CD8-positive, alpha-beta memory T cell (primary cell): ENCODE measurements at regions of chr12 and their contacts with region 1.

Region 1: GRCh38 chr12:56315622-56316473 is at the start of gene CNPY2:
- DNase-seq: peak; percentile 91 to 96 (median 93)
- H3K4me3 ChIP-seq: peak within 1 kb of the TSS; percentile 100
- H3K4me3 Mint-ChIP-seq: peak within 1 kb of the TSS; percentile 97 to 100 (median 99)
- H3K27ac ChIP-seq: peak within 1 kb of the TSS; percentile 97
- H3K27ac Mint-ChIP-seq: peak within 1 kb of the TSS; percentile 97 to 100 (median 99)
- H3K4me1 ChIP-seq: peaks cover 15% of the 10 kb centered on the region
- H3K4me1 Mint-ChIP-seq: peaks cover 14 to 21% (median 15%) of the 10 kb centered on the region in 3 donors
- H3K27me3 ChIP-seq: no peaks in the 10 kb centered on the region
- H3K27me3 Mint-ChIP-seq: no peaks in the 10 kb centered on the region
- total RNA-seq, gene CNPY2: 165 to 167 TPM

Region 2: GRCh38 chr12:56110571-56110970 is 205.3 kb before region 1 on chr12:
- CTCF ChIA-PET with region 1: no interaction called
- POLR2A ChIA-PET with region 1: no interaction called
- DNase-seq: no peak
- H3K4me3 ChIP-seq: no peak overlapping the region
- H3K4me3 Mint-ChIP-seq: peak overlapping the region in 1 of 7 donors; percentile 66
- H3K27ac ChIP-seq: no peak overlapping the region
- H3K27ac Mint-ChIP-seq: peak overlapping the region in 4 of 8 donors; percentile 53 to 79 (median 60)
- H3K4me1 ChIP-seq: peaks cover 14% of the 10 kb centered on the region
- H3K4me1 Mint-ChIP-seq: peaks cover 15 to 22% (median 18%) of the 10 kb centered on the region in 3 donors
- H3K27me3 ChIP-seq: no peaks in the 10 kb centered on the region
- H3K27me3 Mint-ChIP-seq: no peaks in the 10 kb centered on the region

Region 3: GRCh38 chr12:56221527-56222387 is 94.1 kb before region 1 on chr12 and contains the start of gene RNF41:
- CTCF ChIA-PET with region 1: no interaction called
- POLR2A ChIA-PET with region 1: no interaction called
- DNase-seq: peak; percentile 89 to 95 (median 92)
- H3K4me3 ChIP-seq: peak within 1 kb of the TSS; percentile 89
- H3K4me3 Mint-ChIP-seq: peak within 1 kb of the TSS; percentile 89 to 99 (median 97)
- H3K27ac ChIP-seq: peak within 1 kb of the TSS; percentile 96
- H3K27ac Mint-ChIP-seq: peak within 1 kb of the TSS; percentile 99 to 100 (median 100)
- H3K4me1 ChIP-seq: peaks cover 34% of the 10 kb centered on the region
- H3K4me1 Mint-ChIP-seq: peaks cover 42 to 56% (median 54%) of the 10 kb centered on the region in 3 donors
- H3K27me3 ChIP-seq: no peaks in the 10 kb centered on the region
- H3K27me3 Mint-ChIP-seq: peaks cover 0 to 2% of the 10 kb centered on the region in 2 donors
- total RNA-seq, gene RNF41: 41.2 to 42.3 TPM

Region 4: GRCh38 chr12:56333679-56334489 is 18.0 kb after region 1 on chr12 and contains the start of gene PAN2:
- CTCF ChIA-PET with region 1: interaction called, 9 read pairs
- POLR2A ChIA-PET with region 1: interaction called, 16 read pairs
- DNase-seq: peak; percentile 88 to 95 (median 94)
- H3K4me3 ChIP-seq: peak within 1 kb of the TSS; percentile 94
- H3K4me3 Mint-ChIP-seq: peak within 1 kb of the TSS; percentile 96 to 99 (median 97)
- H3K27ac ChIP-seq: peak within 1 kb of the TSS; percentile 99
- H3K27ac Mint-ChIP-seq: peak within 1 kb of the TSS; percentile 100
- H3K4me1 ChIP-seq: peaks cover 30% of the 10 kb centered on the region
- H3K4me1 Mint-ChIP-seq: peaks cover 30 to 53% (median 49%) of the 10 kb centered on the region in 3 donors
- H3K27me3 ChIP-seq: no peaks in the 10 kb centered on the region
- H3K27me3 Mint-ChIP-seq: peaks cover 0 to 5% of the 10 kb centered on the region in 2 donors
- total RNA-seq, gene PAN2: 36.6 to 40.4 TPM

Region 5: DNA sequence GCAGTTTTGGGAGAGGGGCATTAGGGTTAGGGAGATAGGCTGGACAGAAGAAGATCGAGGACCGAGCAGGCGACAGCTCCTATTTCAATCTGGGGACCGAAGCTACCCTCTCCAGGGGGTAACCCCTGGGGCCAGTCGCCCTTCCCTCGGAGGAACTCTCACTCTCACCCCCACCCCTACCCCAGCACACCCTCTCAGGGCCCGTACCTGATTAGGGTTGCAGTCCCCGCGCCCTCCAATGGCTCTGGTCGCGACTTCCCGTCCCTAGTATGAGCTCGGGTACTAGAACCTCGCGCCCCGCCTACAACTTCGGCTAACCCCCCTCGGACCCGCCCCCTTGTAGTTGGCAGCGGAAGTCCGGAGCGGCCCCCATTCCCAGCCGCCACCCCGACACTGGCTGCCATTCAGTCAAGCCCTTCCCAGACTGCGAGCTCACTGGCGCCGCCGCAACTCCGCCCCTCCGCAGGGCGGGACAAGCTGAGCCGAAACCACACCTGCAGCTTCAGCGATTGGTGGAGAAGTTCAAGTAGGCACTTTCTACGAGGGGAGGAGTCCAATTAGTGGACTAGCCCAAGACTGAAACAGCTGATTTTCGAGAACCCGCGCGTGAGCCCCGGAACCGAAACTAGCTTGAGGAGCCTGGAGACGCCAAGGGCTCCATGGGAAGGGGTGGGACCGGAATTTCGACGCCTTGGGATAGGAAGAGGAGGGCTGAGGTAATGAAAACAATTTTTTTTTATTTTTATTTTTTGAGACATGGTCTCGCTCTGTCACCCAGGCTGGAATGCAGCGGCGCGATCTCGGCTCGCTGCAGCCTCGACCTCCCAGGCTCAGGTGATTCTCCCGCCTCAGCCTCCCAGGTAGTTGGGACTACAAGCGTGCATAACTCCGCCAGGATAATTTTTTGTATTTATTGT is 44.3 kb after region 1 on chr12 and contains the start of gene STAT2:
- CTCF ChIA-PET with region 1: interaction called, 3 read pairs
- POLR2A ChIA-PET with region 1: interaction called, 20 read pairs
- DNase-seq: peak; percentile 99 to 100 (median 99)
- H3K4me3 ChIP-seq: peak within 1 kb of the TSS; percentile 96
- H3K4me3 Mint-ChIP-seq: peak within 1 kb of the TSS; percentile 90 to 99 (median 96)
- H3K27ac ChIP-seq: peak within 1 kb of the TSS; percentile 91
- H3K27ac Mint-ChIP-seq: peak within 1 kb of the TSS; percentile 61 to 98 (median 96)
- H3K4me1 ChIP-seq: peaks cover 28% of the 10 kb centered on the region
- H3K4me1 Mint-ChIP-seq: peaks cover 26 to 45% (median 33%) of the 10 kb centered on the region in 3 donors
- H3K27me3 ChIP-seq: no peaks in the 10 kb centered on the region
- H3K27me3 Mint-ChIP-seq: no peaks in the 10 kb centered on the region
- total RNA-seq, gene STAT2: 61.6 to 63.5 TPM

Region 6: GRCh38 chr12:56468216-56469006 is 152.6 kb after region 1 on chr12 and contains the start of gene SPRYD4:
- CTCF ChIA-PET with region 1: interaction called, 10 read pairs
- POLR2A ChIA-PET with region 1: interaction called, 14 read pairs
- DNase-seq: peak; percentile 90 to 96 (median 94)
- H3K4me3 ChIP-seq: peak within 1 kb of the TSS; percentile 100
- H3K4me3 Mint-ChIP-seq: peak within 1 kb of the TSS; percentile 95 to 98 (median 96)
- H3K27ac ChIP-seq: peak within 1 kb of the TSS; percentile 94
- H3K27ac Mint-ChIP-seq: peak within 1 kb of the TSS; percentile 94 to 99 (median 98)
- H3K4me1 ChIP-seq: peaks cover 15% of the 10 kb centered on the region
- H3K4me1 Mint-ChIP-seq: peaks cover 23 to 52% (median 42%) of the 10 kb centered on the region in 3 donors
- H3K27me3 ChIP-seq: no peaks in the 10 kb centered on the region
- H3K27me3 Mint-ChIP-seq: no peaks in the 10 kb centered on the region
- total RNA-seq, gene SPRYD4: 3.7 to 3.9 TPM

Region 7: DNA sequence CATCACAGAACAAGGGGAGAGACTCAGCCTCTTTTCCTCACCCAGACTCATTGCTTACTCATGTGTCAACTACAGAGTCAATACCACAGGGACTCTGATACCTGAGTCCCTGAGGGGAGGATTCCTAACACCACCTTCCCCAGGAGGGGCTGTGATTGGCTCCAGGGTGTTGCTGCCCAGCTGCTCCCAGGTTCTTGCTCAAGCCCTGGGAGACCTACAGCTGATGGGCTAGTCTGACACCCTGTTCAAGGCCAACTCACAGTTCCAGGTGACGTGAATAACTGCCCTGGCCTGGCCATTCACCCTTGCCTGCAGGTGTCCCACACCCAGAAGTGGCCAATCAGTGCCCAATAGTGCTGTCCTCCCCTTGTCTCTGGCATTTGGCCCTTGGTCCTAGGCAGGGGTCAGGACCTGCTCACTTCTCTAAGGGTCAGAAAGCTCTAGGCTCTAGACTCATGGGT is 161.2 kb after region 1 on chr12:
- CTCF ChIA-PET with region 1: no interaction called
- POLR2A ChIA-PET with region 1: interaction called, 10 read pairs
- DNase-seq: no peak
- H3K4me3 ChIP-seq: no peak overlapping the region
- H3K4me3 Mint-ChIP-seq: no peak overlapping the region
- H3K27ac ChIP-seq: no peak overlapping the region
- H3K27ac Mint-ChIP-seq: peak overlapping the region in 4 of 8 donors; percentile 17 to 43 (median 18)
- H3K4me1 ChIP-seq: no peaks in the 10 kb centered on the region
- H3K4me1 Mint-ChIP-seq: peaks cover 0 to 8% (median 2%) of the 10 kb centered on the region in 3 donors
- H3K27me3 ChIP-seq: no peaks in the 10 kb centered on the region
- H3K27me3 Mint-ChIP-seq: no peaks in the 10 kb centered on the region